ENCODE measurements at regions of chr7 and their contacts with region 1.

Region 1: GRCh38 chr7:149067876-149068275 is 22.6 kb downstream of the ZNF786 start:
- DNase-seq: no peak
- ATAC-seq: no peak

Region 2: GRCh38 chr7:148142660-148143248 is 925.1 kb before region 1 on chr7:
- intact Hi-C with region 1: no loop called
- DNase-seq: no peak
- ATAC-seq: peak; percentile 55

Region 3: GRCh38 chr7:149005241-149006050 is 62.4 kb before region 1 on chr7:
- intact Hi-C with region 1: loop called (anchors 10 kb)
- DNase-seq: peak; percentile 92
- ATAC-seq: peak; percentile 92

Region 4: DNA sequence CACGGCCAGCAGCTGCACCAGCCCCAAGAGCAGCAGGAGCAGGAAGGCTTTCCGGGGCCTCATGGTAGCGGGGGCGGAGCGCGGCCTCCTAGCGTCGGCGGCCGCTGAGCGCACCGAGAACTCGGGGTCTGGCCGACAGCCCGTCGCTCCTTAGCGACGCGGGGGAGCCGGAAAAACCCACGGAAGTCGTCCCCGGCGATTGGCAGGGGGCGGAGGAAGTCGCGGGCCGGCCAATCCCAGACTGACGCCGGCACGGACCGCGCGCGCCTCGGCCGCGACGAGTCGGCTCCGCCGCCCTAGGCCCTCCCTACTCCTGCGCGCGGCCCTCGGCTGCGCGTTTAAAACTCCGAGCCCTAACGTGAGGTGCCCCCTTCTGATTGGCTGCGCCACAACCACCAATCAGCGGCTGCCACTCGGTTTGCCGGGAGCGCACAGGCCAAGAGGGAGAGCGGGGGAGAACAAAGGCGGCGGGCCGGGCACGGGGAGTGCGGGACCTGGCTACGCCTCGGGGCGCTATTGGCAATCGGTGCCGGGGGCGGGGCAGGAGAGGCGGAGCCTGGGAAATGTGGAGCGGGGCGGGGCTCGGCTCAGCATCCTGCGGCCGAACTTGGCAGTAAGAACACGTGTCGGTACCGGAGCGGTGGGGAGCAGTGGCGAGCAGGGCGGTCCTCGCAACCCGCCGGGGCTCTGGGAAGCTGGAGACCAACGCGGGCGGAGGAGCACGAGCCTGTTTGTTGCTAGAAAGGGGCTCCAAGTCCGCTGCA is 39.3 kb before region 1 on chr7 and contains the start of gene PDIA4:
- intact Hi-C with region 1: loop called (anchors 5 kb)
- DNase-seq: peak; percentile 99
- ATAC-seq: peak; percentile 98
- total RNA-seq, gene PDIA4: 32.2 TPM

Measured in Right ventricle myocardium superior (tissue), 1 donor.